ENCODE measurements at regions of chr15 and their contacts with region 1.

Region 1: DNA sequence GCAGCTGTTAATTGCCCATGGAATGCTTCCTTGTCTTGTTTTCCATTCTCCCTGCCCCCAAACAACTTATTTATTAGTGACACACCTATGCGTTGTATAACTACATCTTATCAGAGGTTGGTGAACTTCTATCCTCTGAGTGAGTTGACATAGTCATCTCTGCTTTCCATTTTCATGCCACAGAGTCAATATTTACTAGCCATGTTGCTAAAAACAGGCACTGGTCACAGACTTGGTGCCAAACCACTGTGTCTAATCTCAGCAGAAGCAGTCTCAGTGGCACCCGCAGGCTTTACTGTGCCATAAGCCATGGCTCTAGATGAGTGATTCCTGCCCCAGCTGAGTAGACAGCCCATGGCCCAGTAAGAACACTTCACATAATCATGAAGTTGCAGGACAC is 26.5 kb downstream of the DAPK2 start:
- DNase-seq: no peak

Region 2: GRCh38 chr15:63677730-63678129 is 342.0 kb before region 1 on chr15:
- intact Hi-C with region 1: no loop called
- DNase-seq: no peak

Region 3: DNA sequence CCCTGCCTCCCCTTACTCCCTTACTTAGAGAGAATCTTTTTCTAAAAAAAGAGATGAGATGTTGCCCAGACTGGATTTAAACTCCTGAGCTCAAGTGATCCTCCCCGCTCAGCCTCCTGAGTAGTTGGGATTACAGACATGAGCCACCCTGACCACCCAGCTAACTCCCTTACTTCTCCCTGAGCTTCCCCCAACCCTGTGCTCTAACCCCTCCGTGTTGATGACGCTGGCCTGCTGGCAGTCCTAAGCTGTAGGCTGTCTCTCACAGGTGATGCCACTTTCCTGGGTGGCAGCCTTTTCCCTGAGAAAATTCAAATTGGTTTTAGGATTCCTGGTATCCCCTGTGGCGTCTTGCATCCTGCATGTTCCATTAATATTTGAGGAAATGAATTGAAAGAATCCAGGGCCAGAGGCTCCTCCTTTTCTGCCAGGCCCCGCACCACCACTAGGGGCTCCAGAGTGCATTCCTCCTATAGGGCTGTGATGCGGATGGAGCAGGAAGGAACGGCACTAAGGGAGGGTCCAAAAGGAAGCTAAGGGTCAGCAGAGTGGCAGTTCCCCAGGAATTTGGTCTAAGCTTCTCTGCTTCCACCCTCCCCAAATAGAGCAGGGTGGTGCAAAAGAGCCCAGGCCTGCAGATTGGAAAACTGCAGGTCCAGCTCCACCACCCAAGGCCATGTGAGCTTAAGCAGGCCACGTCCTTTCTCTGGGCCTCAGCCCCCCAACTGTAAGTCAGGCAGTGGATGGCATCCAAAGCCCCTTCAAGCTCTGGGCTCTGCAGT is 74.6 kb before region 1 on chr15:
- intact Hi-C with region 1: no loop called
- DNase-seq: peak; percentile 86

Region 4: GRCh38 chr15:63983061-63983711 is 36.6 kb before region 1 on chr15:
- intact Hi-C with region 1: loop called (anchors 5 kb)
- DNase-seq: no peak

Region 5: DNA sequence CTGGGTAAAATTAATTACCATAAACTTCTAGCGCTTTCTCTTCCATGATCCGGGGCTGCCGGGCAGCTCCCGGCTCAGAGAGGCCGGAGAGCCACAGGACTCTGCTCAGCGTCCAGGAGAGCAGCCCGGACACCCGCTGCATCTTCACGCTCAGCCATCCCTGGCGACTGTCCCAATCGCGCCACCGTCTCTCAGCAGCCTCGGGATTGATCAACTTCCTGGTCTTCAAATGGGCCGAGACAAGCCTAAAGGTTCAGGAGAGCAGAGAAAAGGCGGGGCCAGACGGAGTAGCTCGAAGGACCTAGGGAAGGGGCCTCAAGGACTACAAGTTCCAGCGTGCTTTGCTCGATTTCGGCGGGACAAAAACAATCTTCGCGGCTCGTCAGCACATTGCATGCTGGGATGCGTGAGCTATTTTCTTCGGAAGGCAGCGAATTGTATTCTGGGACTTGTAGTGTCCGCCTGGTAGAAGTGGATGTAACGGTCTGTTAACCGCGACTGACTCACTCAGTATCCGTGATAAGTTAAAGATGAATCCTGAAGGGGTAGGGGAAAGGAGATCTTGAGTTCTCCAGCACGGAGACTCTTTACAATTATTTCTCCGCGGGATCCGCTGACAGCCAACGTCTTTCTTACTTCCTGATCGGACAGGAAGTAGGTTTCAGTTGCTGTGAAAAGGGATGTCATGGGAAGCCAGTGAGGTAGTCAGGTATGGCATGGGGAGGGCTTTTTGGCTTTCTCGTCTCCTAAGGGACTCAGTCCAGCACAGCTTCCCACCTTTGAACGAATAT is 74.1 kb after region 1 on chr15 and contains the start of gene CIAO2A:
- intact Hi-C with region 1: no loop called
- DNase-seq: peak; percentile 97
- total RNA-seq, gene CIAO2A: 46.9 TPM